ENCODE measurements at regions of chr6 and their contacts with region 1.

Region 1: GRCh38 chr6:83221889-83222479 is 28.8 kb downstream of the RWDD2A start:
- DNase-seq: no peak
- H3K4me3 ChIP-seq: no peak overlapping the region
- H3K4me3 Mint-ChIP-seq: peak overlapping the region; percentile 3
- H3K27ac Mint-ChIP-seq: peak overlapping the region; percentile 5
- H3K4me1 ChIP-seq: peaks cover 32% of the 10 kb centered on the region
- H3K4me1 Mint-ChIP-seq: peaks cover 15% of the 10 kb centered on the region
- H3K27me3 ChIP-seq: no peaks in the 10 kb centered on the region
- H3K27me3 Mint-ChIP-seq: no peaks in the 10 kb centered on the region
- CTCF ChIP-seq: peak in 1 of 2 experiments; percentile 28

Region 2: GRCh38 chr6:83167726-83168278 is 54.2 kb before region 1 on chr6:
- CTCF ChIA-PET with region 1: no interaction called
- POLR2A ChIA-PET with region 1: no interaction called
- intact Hi-C with region 1: no loop called
- DNase-seq: no peak
- H3K4me3 ChIP-seq: no peak overlapping the region
- H3K4me3 Mint-ChIP-seq: no peak overlapping the region
- H3K27ac Mint-ChIP-seq: no peak overlapping the region
- H3K4me1 ChIP-seq: no peaks in the 10 kb centered on the region
- H3K4me1 Mint-ChIP-seq: no peaks in the 10 kb centered on the region
- H3K27me3 ChIP-seq: no peaks in the 10 kb centered on the region
- H3K27me3 Mint-ChIP-seq: no peaks in the 10 kb centered on the region
- CTCF ChIP-seq: no peak

Region 3: GRCh38 chr6:83285917-83286316 is 63.9 kb after region 1 on chr6:
- CTCF ChIA-PET with region 1: no interaction called
- POLR2A ChIA-PET with region 1: no interaction called
- intact Hi-C with region 1: loop called (anchors 5 kb)
- DNase-seq: no peak
- H3K4me3 ChIP-seq: no peak overlapping the region
- H3K4me3 Mint-ChIP-seq: no peak overlapping the region
- H3K27ac Mint-ChIP-seq: no peak overlapping the region
- H3K4me1 ChIP-seq: no peaks in the 10 kb centered on the region
- H3K4me1 Mint-ChIP-seq: no peaks in the 10 kb centered on the region
- H3K27me3 ChIP-seq: no peaks in the 10 kb centered on the region
- H3K27me3 Mint-ChIP-seq: no peaks in the 10 kb centered on the region
- CTCF ChIP-seq: no peak

Region 4: DNA sequence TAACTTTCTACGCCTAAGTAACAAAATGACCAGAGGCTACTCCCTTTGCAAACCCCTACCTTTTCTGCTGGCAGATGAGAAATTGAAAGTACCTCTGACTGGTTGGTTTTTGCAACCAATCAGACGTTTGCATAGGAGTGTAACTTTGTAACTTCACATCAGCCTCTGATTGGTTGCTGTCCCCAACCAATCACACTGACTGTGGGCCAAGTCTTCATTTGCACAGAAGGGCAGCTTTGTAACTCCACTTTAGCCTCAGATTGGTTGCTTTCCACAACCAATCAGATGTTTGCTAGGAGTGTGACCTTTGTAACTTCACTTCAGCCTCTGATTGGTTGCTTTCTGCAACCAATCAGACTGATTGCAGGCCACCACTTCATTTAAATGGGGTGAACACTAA is 119.8 kb after region 1 on chr6:
- CTCF ChIA-PET with region 1: no interaction called
- POLR2A ChIA-PET with region 1: no interaction called
- intact Hi-C with region 1: no loop called
- DNase-seq: no peak
- H3K4me3 ChIP-seq: no peak overlapping the region
- H3K4me3 Mint-ChIP-seq: no peak overlapping the region
- H3K27ac Mint-ChIP-seq: no peak overlapping the region
- H3K4me1 ChIP-seq: no peaks in the 10 kb centered on the region
- H3K4me1 Mint-ChIP-seq: no peaks in the 10 kb centered on the region
- H3K27me3 ChIP-seq: no peaks in the 10 kb centered on the region
- H3K27me3 Mint-ChIP-seq: no peaks in the 10 kb centered on the region
- CTCF ChIP-seq: no peak

Region 5: DNA sequence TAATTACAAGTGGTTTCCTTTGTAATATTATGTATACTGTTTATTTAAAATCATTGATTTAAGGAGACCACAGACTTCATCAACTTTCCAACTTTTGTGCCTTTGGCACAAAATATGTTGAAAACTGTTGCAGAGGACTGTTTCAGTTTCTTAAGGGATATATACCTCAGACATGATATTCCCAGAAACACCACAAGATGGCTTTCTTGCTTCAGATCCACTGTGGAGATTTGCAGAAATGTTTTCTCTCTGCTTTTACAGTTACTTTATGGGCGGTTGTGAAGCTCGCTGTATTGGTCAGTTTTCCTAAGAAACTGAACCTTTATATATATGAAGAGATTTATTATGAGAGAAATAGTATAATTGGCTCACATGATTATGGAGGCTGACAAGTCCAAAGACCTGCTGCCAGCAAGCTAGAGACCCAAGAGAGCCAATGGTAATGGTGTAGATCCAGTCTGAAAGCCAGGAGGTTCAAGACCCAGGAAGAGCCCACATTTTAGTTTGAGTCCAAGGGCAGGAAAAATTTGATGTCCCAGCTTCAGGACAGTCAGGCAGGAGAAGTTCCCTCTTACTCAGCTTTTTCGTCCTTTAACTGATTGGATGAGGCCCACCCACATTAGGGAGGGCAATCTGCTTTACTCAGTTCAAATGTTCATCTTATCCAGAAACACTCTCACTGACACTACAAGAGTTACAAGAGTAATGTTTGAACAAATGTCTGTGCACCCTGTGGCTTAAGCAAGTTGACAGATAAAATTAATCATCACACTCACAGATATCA is 196.1 kb after region 1 on chr6:
- CTCF ChIA-PET with region 1: no interaction called
- POLR2A ChIA-PET with region 1: no interaction called
- intact Hi-C with region 1: loop called (anchors 1 kb)
- DNase-seq: peak in 1 of 2 experiments; percentile 63
- H3K4me3 ChIP-seq: no peak overlapping the region
- H3K4me3 Mint-ChIP-seq: no peak overlapping the region
- H3K27ac Mint-ChIP-seq: peak overlapping the region; percentile 5
- H3K4me1 ChIP-seq: peaks cover 33% of the 10 kb centered on the region
- H3K4me1 Mint-ChIP-seq: peaks cover 35% of the 10 kb centered on the region
- H3K27me3 ChIP-seq: no peaks in the 10 kb centered on the region
- H3K27me3 Mint-ChIP-seq: no peaks in the 10 kb centered on the region
- CTCF ChIP-seq: peak; percentile 63 to 75

Region 6: GRCh38 chr6:83536034-83536646 is 314.2 kb after region 1 on chr6:
- CTCF ChIA-PET with region 1: interaction called, 11 read pairs
- POLR2A ChIA-PET with region 1: no interaction called
- intact Hi-C with region 1: loop called (anchors 5 kb)
- DNase-seq: peak; percentile 59 to 75
- H3K4me3 ChIP-seq: no peak overlapping the region
- H3K4me3 Mint-ChIP-seq: no peak overlapping the region
- H3K27ac Mint-ChIP-seq: no peak overlapping the region
- H3K4me1 ChIP-seq: peaks cover 6% of the 10 kb centered on the region
- H3K4me1 Mint-ChIP-seq: peaks cover 16% of the 10 kb centered on the region
- H3K27me3 ChIP-seq: no peaks in the 10 kb centered on the region
- H3K27me3 Mint-ChIP-seq: peaks cover 6% of the 10 kb centered on the region
- CTCF ChIP-seq: peak; percentile 74 to 82